Left lung (tissue), 14 donors: ENCODE measurements at regions of chr1 and their contacts with region 1.

Region 1: DNA sequence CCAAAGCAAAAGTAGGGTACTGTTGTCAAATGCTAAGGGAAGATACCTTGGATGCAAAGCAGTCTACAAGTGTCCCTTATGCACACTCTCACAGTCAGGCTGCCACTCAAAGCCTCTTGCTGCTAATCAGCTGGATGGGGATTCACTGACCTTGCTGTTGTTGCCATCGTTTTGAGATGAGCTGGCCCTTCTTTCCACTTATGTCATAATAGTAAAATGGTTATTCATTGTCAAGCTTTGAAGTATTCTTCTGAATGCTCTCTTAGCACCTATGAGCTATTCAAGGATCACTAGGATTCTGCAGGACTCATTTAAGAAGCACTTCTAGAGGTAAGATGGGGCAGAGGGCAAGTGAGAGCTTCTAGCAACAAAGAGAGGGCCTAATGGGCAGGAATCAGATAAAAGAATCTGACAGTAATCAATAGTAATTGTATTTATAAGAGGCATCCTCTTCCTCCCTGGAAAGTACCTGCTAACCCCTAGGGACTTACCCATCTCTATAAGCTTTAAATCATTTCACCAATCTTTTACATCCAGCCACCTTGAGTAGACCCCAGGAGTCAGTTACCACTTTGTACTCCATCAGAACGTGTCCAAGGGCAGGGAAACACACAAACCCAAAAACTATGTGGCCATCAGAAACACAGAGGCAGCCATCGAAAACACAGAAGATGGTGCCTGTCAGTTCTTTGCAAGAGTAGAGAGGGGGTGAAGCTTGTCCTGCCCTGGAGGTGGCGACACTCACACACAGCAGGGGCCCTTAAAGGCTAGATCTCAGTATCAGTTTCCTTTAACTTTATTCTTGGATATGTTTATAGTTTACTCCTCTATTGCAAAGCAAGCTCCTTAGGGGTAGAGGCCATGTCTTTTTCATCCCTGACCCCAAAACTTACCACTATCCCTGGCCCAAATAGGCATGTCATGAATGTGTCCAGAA is 103.7 kb upstream of the NFIA start:
- DNase-seq: peak in 1 of 4 donors; percentile 36
- ATAC-seq: peak; percentile 89
- H3K4me3 ChIP-seq: no peak overlapping the region
- H3K27ac ChIP-seq: no peak overlapping the region
- H3K4me1 ChIP-seq: no peaks in the 10 kb centered on the region
- H3K27me3 ChIP-seq: no peaks in the 10 kb centered on the region
- CTCF ChIP-seq: peak; percentile 45 to 52

Region 2: DNA sequence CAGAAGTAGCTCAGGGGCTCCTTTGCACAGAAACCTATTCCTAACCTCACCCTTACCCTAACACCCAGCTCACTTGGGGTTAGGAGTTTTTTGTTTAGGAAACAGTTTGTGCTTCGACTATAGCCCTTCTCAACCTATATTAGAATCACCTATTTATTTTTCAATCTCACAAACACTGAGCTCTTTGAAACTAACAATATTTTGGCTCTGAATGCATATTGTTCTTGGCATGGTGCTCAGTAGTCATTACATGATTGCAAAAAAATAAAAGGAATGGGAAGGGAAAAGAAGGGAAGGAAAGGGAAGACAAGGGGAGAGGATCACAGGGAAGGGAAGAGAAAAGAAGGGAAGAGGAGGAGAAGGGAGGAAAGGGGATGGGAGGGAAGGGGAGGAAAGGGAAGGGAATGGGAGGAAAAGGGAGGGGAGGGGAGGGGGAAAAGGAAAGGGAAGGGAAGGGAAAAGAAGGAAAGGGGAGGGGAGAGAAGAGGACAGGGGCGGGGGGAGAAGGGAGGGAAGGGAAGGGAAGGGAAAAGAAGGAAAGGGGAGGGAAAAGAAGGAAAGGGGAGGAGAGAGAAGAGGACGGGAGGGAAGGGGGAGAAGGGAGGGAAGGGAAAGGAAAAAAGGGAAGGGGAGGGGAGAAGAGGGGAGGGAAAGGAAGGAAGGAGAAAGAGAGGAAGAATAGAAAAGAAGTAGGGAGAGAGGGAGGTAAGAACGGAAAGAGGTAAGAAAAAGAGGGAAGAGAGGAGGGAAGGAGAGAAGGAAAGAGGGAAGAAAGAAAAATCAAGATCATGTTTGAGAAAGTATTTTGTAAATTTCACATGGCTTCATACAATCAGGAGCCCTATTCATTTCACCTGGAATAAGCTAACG is 380.4 kb before region 1 on chr1:
- intact Hi-C with region 1: no loop called
- DNase-seq: peak in 2 of 4 donors; percentile 18 to 30
- ATAC-seq: no peak
- H3K4me3 ChIP-seq: no peak overlapping the region
- H3K27ac ChIP-seq: no peak overlapping the region
- H3K4me1 ChIP-seq: no peaks in the 10 kb centered on the region
- H3K27me3 ChIP-seq: no peaks in the 10 kb centered on the region
- CTCF ChIP-seq: no peak

Region 3: DNA sequence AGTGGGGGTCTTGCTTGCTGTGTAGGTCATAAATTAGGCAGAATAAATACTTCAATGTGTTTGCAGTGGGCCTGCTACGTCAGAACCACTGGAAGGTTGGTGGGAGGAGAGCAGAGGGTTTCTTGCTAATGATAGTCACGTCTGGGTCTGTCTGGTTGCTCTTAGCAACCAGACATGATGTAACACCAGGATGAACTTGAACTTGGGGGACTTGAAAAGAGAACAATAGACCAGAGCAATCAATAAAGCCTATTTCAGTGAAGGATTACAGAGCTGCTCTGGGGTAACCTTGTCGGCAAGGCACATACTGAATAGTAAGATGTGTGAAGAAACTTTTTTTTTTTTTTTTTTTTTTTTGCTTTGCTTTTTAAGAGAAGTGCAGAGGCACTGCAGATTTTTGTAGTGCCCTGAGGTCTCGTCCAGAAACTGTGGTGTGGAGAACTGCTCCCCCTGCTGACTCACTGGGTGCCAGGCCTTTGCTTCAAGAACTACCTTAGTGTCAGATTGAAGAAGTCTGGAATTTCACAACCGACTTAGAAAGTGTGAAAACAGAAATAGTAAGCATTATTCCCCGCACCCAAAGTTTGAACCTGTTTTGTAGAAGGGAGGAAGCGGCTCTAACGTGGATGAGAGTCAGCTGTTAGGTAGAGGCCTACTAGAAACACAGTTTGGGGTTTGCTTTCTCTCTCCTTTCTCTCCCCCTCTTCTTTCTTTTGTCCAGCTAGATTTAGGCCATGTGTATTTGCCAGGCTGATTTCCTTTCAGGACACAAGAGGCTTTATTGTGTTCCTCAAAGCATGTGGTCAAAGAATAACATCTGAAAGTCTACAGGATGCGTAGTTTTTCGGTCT is 474.6 kb after region 1 on chr1:
- intact Hi-C with region 1: loop called in 1 of 2 experiments (anchors 10 kb)
- DNase-seq: peak in 3 of 4 donors; percentile 86 to 94 (median 88)
- ATAC-seq: peak; percentile 96
- H3K4me3 ChIP-seq: no peak overlapping the region
- H3K27ac ChIP-seq: peak overlapping the region; percentile 10 to 85
- H3K4me1 ChIP-seq: peaks cover 17 to 38% of the 10 kb centered on the region in 2 donors
- H3K27me3 ChIP-seq: no peaks in the 10 kb centered on the region
- CTCF ChIP-seq: peak; percentile 63 to 68

Region 4: DNA sequence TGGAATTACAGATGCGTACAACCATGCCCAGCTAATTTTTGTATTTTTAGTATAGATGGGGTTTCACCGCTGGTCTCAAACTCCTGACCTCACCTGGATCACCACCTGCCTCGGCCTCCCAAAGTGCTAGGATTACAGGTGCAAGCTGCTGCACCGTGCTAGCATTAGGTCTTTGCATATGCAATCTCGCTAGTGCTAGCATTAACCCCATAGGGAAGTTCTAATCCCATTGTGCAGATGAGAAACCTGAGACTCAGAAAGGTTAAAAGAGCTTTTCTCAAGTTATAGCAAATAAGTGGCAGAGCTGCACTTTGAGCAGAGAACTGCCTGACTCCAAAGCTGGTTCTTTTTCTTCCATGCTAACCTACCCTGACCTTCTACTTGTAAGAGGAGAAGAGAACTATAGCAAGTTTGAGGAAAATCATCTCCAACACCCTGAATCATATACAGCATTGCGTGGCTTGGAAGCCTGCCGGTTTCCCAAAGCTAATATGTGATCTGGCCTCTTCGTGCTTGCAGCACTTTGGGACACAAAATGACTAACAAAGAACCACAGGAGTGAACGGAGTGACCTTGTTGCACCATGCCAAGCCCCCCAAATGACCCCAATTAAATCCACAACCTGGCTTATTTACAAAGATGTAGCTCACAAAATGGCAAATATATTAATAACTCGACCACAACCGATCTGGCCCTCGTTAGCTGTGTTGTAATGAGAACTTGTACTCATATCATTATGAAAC is 561.2 kb after region 1 on chr1:
- intact Hi-C with region 1: no loop called
- DNase-seq: peak in 1 of 4 donors; percentile 35
- ATAC-seq: no peak
- H3K4me3 ChIP-seq: no peak overlapping the region
- H3K27ac ChIP-seq: no peak overlapping the region
- H3K4me1 ChIP-seq: no peaks in the 10 kb centered on the region
- H3K27me3 ChIP-seq: no peaks in the 10 kb centered on the region
- CTCF ChIP-seq: no peak